AG04449 (cell line): ENCODE measurements at regions of chr11 and their contacts with region 1.

Region 1: GRCh38 chr11:72430741-72431570 is 3.4 kb downstream of the CLPB start:
- DNase-seq: no peak
- H3K4me3 ChIP-seq: no peak overlapping the region
- CTCF ChIP-seq: peak; percentile 75

Region 2: GRCh38 chr11:71977743-71978418 is 453.1 kb before region 1 on chr11:
- CTCF ChIA-PET with region 1: interaction called, 85 read pairs
- POLR2A ChIA-PET with region 1: no interaction called
- DNase-seq: no peak
- H3K4me3 ChIP-seq: no peak overlapping the region
- CTCF ChIP-seq: peak; percentile 57

Region 3: DNA sequence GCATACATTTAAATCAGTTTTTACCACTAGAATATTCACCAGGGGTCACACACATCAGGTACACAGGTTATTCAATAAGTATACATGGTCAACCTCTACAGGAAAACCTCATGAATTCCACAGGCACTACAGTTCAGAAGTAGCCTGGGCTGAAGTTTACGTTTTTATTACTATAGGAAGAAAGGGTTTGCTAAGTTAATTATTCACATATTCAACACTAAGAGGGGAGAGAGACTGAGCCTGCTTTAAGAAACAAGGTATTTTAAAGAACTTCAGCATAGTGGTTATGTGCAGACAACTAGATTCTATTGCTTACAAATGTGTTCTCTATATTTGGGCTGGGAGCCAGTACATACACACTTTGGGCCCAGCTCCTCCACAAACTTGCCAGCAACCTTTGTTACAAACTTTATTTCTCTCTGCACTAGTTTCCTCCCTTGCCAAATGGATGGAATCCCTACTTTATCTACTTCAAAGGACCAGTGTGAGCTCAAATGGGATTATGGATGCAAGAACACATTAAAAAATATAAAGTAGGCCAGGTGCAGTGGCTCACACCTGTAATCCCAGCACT is 400.4 kb before region 1 on chr11:
- CTCF ChIA-PET with region 1: interaction called, 67 read pairs
- POLR2A ChIA-PET with region 1: no interaction called
- DNase-seq: no peak
- H3K4me3 ChIP-seq: no peak overlapping the region
- CTCF ChIP-seq: no peak

Region 4: DNA sequence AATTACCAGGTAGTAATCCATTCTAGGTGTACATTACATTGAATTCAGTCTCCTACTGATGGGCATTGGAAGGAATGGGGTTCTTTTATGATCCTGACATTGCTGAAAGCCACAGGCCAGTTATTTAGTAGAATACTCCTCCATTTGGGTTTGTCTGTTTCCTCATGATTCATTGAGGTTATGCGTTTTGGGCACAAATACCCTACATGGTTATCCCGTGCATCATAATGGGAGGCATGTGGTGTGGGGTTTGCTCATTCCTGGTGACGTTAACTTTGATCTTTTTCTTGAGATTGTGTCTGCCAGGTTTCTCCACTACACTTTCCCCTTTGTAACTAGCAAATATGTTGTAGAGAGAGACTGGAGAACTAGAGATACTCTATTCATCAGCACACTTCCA is 289.9 kb before region 1 on chr11:
- CTCF ChIA-PET with region 1: interaction called, 10 read pairs
- POLR2A ChIA-PET with region 1: interaction called, 3 read pairs
- DNase-seq: peak; percentile 82
- H3K4me3 ChIP-seq: no peak overlapping the region
- CTCF ChIP-seq: no peak

Region 5: GRCh38 chr11:72238040-72238450 is 192.9 kb before region 1 on chr11:
- CTCF ChIA-PET with region 1: interaction called, 44 read pairs
- POLR2A ChIA-PET with region 1: interaction called, 6 read pairs
- DNase-seq: no peak
- H3K4me3 ChIP-seq: no peak overlapping the region
- CTCF ChIP-seq: peak; percentile 82

Region 6: GRCh38 chr11:72352859-72353551 is 78.0 kb before region 1 on chr11:
- CTCF ChIA-PET with region 1: interaction called, 13 read pairs
- POLR2A ChIA-PET with region 1: no interaction called
- DNase-seq: peak; percentile 23
- H3K4me3 ChIP-seq: no peak overlapping the region
- CTCF ChIP-seq: peak; percentile 72

Region 7: DNA sequence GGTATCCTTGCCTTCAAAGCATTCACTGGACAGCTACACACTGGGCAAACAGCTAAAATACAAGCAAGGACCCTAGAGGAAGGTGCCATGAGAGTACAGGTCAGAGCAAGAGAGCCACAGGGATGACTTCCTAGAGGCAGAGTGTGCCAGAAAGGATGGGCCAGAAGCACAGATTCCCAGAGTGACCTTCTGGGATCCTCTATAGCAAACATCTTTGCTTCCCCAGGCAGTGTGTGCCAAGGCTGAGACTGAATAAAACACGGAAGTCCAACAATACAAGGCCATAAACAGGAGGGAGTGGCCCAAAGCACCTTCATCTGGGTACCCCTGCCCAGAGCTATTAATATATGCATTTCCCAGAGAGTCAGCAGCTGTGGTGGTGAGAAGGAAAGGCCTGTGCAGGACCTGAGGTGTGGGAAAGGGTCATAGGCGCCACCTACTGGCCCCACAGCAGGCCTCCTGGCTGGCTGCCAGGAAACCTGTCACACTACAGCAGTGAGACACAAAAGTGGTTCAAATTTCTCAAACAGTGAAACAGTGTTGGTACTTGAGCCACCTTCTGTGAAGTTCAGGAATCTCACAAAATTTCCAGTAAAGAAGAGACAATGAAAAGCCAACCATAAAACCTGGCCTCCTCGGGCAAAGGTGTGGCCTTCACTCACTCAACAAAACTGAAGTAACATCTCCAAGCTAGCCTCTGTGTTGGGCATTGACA is 16.9 kb before region 1 on chr11:
- CTCF ChIA-PET with region 1: interaction called, 229 read pairs
- POLR2A ChIA-PET with region 1: interaction called, 3 read pairs
- DNase-seq: no peak
- H3K4me3 ChIP-seq: no peak overlapping the region
- CTCF ChIP-seq: peak; percentile 92

Region 8: GRCh38 chr11:72519220-72519881 is 88.4 kb after region 1 on chr11:
- CTCF ChIA-PET with region 1: no interaction called
- POLR2A ChIA-PET with region 1: no interaction called
- DNase-seq: no peak
- H3K4me3 ChIP-seq: peak overlapping the region; percentile 34
- CTCF ChIP-seq: no peak